Sigmoid colon (tissue), 7 donors: ENCODE measurements at regions of chr9 and their contacts with region 1.

Region 1: GRCh38 chr9:127877566-127877998 is at the start of gene AK1:
- DNase-seq: peak; percentile 91
- H3K4me3 ChIP-seq: peak within 1 kb of the TSS; percentile 45 to 74 (median 62)
- H3K27ac ChIP-seq: peak within 1 kb of the TSS; percentile 82 to 87 (median 84)
- H3K4me1 ChIP-seq: peaks cover 0 to 56% (median 52%) of the 10 kb centered on the region in 4 donors
- H3K27me3 ChIP-seq: no peaks in the 10 kb centered on the region
- CTCF ChIP-seq: no peak
- EP300 ChIP-seq: no peak
- POLR2A ChIP-seq: peak in 1 of 2 donors; percentile 53
- total RNA-seq, gene AK1: 28.8 to 73.2 (median 48.7) TPM

Region 2: DNA sequence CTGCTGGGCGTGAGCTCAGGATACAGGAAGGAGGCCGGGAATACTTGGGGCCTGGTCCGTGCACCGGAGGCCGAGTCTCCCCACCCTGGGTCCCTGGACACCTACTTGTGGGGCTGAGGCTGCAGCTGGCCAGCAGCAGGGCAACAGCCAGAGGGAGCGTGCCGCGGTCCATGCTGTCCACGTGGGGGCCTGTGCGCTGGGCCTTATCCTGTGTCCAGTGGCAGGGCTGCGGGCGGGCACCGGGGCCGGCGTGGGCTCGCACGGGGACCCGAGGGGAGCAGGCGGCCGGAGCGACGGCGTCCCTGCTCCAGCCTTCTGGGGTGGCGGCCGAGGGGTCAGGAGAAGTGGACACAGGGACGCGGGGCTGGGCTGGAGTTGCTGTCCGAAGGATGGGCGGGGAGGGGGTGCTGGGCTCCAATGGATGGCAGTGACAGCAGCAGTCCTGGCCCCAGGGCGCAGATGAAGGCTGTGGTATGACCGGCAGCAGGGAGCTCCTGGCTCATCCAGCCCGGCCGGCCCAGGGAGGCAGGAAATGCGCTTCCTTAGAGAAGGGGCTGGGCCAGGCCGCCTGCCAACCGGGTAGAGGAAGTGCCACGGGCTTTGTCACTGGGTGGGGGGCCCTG is 23.3 kb before region 1 on chr9 and contains the start of gene ENG:
- intact Hi-C with region 1: no loop called
- DNase-seq: peak; percentile 90
- H3K4me3 ChIP-seq: peak within 1 kb of the TSS; percentile 30 to 56 (median 48)
- H3K27ac ChIP-seq: peak within 1 kb of the TSS; percentile 73 to 77 (median 74)
- H3K4me1 ChIP-seq: peaks cover 0 to 21% (median 15%) of the 10 kb centered on the region in 4 donors
- H3K27me3 ChIP-seq: no peaks in the 10 kb centered on the region
- CTCF ChIP-seq: no peak
- EP300 ChIP-seq: no peak
- POLR2A ChIP-seq: no peak
- total RNA-seq, gene ENG: 17.1 to 28.5 (median 20.6) TPM

Region 3: DNA sequence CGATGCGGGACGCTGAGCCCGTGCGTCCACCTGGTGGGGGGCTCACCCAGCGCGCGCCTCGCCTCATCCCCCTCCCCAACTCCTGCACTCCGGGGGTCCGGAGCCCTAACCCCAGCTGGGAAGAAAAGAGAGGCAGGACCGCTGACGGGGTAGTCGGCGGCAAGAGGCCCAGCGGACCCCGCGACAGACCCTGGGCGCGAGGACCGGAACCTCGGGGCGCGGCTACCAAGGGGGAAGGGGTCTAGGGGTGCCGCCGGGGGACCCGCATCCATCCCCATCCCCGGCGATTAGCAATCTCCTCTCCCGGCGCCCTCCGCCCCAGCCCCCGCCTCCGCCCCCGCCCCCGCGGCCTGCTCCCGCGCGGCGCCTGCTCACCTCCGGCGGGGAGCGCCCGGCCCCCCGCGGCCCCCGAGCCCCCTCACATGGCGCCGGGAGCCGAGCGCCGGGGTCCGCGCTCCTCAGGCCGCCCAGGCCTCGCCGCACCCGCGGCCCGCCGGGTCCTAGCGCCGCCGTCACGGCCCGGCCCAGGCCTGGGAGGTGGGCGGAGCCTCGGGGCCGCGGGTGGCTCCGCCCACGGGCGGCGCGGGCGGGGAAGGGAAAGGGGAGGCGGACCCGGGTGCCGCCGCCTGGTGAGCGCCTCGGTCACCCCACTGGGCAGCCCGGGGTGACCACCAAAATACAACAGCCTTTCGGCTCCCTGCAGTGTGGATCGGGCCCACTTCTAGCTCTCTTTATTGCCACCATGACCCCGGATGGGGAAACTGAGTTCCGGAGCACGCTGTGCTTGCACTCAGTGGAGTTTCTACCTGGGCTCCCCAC is 21.8 kb after region 1 on chr9 and contains the start of gene ST6GALNAC6:
- intact Hi-C with region 1: loop called (anchors 1 kb)
- DNase-seq: peak; percentile 85
- H3K4me3 ChIP-seq: peak within 1 kb of the TSS; percentile 94 to 100 (median 94)
- H3K27ac ChIP-seq: peak within 1 kb of the TSS; percentile 94 to 98 (median 97)
- H3K4me1 ChIP-seq: peaks cover 0 to 59% (median 52%) of the 10 kb centered on the region in 4 donors
- H3K27me3 ChIP-seq: no peaks in the 10 kb centered on the region
- CTCF ChIP-seq: no peak
- EP300 ChIP-seq: no peak
- POLR2A ChIP-seq: peak in 1 of 2 donors; percentile 29
- total RNA-seq, gene ST6GALNAC6: 107 to 125 (median 114) TPM